Naive thymus-derived CD4-positive, alpha-beta T cell (primary cell): ENCODE measurements at regions of chr21 and their contacts with region 1.

Region 1: DNA sequence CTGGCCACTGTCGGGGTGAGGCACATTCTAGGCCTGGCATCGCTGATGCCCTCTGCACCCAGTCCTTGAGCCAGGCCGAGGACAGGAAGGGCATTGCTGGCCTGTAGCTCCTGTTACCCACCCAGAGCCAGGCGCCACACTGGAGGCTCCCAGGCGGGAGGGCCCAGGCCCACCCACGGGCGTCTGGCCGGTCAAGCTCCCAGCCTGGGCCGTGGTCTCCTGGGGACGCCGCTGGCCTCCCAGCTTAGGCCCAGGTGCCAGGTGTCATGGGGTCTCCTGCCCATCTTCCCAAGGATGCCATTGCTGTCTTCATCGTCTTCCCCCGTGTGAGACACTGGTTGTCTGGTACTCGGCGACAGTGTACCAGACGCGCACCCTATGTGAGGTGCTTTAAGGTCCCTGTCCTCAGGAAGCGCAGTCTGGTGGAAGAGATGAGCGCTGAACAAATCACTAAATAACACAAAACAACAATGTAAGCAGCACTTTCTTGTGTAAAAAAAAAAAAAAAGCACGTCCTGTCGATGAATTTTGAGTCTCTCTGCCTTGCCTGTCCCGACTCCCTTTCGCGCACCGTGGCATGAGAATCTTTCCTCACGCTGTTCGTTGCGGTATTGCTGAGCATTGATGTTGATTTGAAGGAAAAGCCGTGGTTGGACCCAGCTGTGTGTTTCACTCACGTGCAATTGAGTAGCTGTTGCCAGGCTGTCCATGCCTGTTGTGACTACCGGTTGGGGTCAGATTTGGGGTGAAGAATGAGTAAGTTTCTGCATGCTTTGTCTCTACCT is 27.0 kb upstream of the TRAPPC10 start:
- DNase-seq: peak in 2 of 9 donors; percentile 13 to 19
- ATAC-seq: peak; percentile 16
- H3K4me3 ChIP-seq: no peak overlapping the region
- H3K4me3 Mint-ChIP-seq: peak overlapping the region in 4 of 10 donors; percentile 6 to 49 (median 26)
- H3K27ac ChIP-seq: no peak overlapping the region
- H3K27ac Mint-ChIP-seq: peak overlapping the region; percentile 31 to 84 (median 67)
- H3K4me1 ChIP-seq: peaks cover 0 to 6% of the 10 kb centered on the region in 2 donors
- H3K4me1 Mint-ChIP-seq: peaks cover 5 to 29% (median 17%) of the 10 kb centered on the region in 7 donors
- H3K27me3 ChIP-seq: no peaks in the 10 kb centered on the region
- H3K27me3 Mint-ChIP-seq: no peaks in the 10 kb centered on the region

Region 2: GRCh38 chr21:43789276-43790009 is 195.7 kb before region 1 on chr21 and contains the start of gene RRP1:
- CTCF ChIA-PET with region 1: no interaction called
- POLR2A ChIA-PET with region 1: no interaction called
- intact Hi-C with region 1: no loop called
- DNase-seq: peak; percentile 88 to 100 (median 96)
- ATAC-seq: peak; percentile 99
- H3K4me3 ChIP-seq: peak within 1 kb of the TSS; percentile 87
- H3K4me3 Mint-ChIP-seq: peak within 1 kb of the TSS; percentile 86 to 94 (median 92)
- H3K27ac ChIP-seq: peak within 1 kb of the TSS; percentile 84
- H3K27ac Mint-ChIP-seq: peak within 1 kb of the TSS; percentile 74 to 95 (median 91)
- H3K4me1 ChIP-seq: peaks cover 5 to 10% of the 10 kb centered on the region in 2 donors
- H3K4me1 Mint-ChIP-seq: peaks cover 7 to 29% (median 21%) of the 10 kb centered on the region in 7 donors
- H3K27me3 ChIP-seq: no peaks in the 10 kb centered on the region
- H3K27me3 Mint-ChIP-seq: no peaks in the 10 kb centered on the region
- total RNA-seq, gene RRP1: 24.2 to 33.1 (median 28.8) TPM

Region 3: GRCh38 chr21:44049182-44049978 is 64.3 kb after region 1 on chr21:
- CTCF ChIA-PET with region 1: no interaction called
- POLR2A ChIA-PET with region 1: no interaction called
- intact Hi-C with region 1: loop called in 1 of 2 experiments (anchors 10 kb)
- DNase-seq: no peak
- ATAC-seq: no peak
- H3K4me3 ChIP-seq: no peak overlapping the region
- H3K4me3 Mint-ChIP-seq: peak overlapping the region in 1 of 10 donors; percentile 51
- H3K27ac ChIP-seq: no peak overlapping the region
- H3K27ac Mint-ChIP-seq: peak overlapping the region in 8 of 9 donors; percentile 56 to 88 (median 72)
- H3K4me1 ChIP-seq: no peaks in the 10 kb centered on the region
- H3K4me1 Mint-ChIP-seq: peaks cover 17 to 37% (median 25%) of the 10 kb centered on the region in 7 donors
- H3K27me3 ChIP-seq: no peaks in the 10 kb centered on the region
- H3K27me3 Mint-ChIP-seq: no peaks in the 10 kb centered on the region